ENCODE measurements at regions of chr5 and their contacts with region 1.

Region 1: GRCh38 chr5:139560752-139561654 is at the start of gene UBE2D2:
- DNase-seq: peak; percentile 90
- ATAC-seq: peak; percentile 94
- H3K4me3 ChIP-seq: peak within 1 kb of the TSS; percentile 91 to 98 (median 95)
- H3K27ac ChIP-seq: peak within 1 kb of the TSS; percentile 95
- H3K4me1 ChIP-seq: peaks cover 42% of the 10 kb centered on the region
- H3K27me3 ChIP-seq: no peaks in the 10 kb centered on the region; a peak in 1 of 5 replicates
- CTCF ChIP-seq: peak; percentile 10; the same call in 1 of the 2 replicates
- EP300 ChIP-seq: no peak
- POLR2A ChIP-seq: peak; percentile 78 to 84
- RAD21 ChIP-seq: no peak; the same call in 1 of the 2 replicates
- total RNA-seq, gene UBE2D2: 109 and 118 TPM in 2 replicates

Region 2: DNA sequence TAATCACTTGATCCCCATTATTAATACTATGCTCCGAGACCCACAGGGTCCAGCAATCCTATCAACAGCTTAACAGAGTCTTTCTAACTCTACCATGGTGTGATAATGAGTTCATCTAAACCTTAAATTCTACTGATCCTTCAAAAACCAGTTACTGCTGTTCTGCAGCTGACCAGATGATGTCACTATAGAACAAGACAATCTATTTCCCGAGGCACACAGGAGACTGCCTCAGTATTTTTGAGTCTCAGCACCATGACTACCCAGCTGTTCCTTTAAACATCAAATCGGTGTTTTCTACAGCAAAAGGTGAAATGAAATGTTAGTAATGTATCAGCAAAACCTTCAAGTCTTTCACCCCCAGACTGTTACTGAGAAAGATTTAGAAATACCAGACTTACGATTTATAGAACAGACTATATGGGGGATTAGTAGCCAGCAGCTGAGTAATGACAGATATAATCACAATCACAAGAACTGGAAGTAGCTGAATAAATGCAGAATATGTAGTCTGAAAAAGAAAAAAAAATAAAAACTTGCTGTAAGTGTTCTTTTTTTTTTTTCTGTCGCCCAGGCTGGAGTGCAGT is 138.6 kb before region 1 on chr5:
- CTCF ChIA-PET with region 1: no interaction called
- POLR2A ChIA-PET with region 1: interaction called, 3 read pairs
- in situ Hi-C with region 1: no loop called
- intact Hi-C with region 1: loop called (anchors 5 kb)
- DNase-seq: peak; percentile 66
- ATAC-seq: peak; percentile 82
- H3K4me3 ChIP-seq: no peak overlapping the region
- H3K27ac ChIP-seq: no peak overlapping the region
- H3K4me1 ChIP-seq: peaks cover 16% of the 10 kb centered on the region
- H3K27me3 ChIP-seq: no peaks in the 10 kb centered on the region
- CTCF ChIP-seq: peak; percentile 89
- EP300 ChIP-seq: no peak
- POLR2A ChIP-seq: no peak
- RAD21 ChIP-seq: peak; percentile 81

Region 3: DNA sequence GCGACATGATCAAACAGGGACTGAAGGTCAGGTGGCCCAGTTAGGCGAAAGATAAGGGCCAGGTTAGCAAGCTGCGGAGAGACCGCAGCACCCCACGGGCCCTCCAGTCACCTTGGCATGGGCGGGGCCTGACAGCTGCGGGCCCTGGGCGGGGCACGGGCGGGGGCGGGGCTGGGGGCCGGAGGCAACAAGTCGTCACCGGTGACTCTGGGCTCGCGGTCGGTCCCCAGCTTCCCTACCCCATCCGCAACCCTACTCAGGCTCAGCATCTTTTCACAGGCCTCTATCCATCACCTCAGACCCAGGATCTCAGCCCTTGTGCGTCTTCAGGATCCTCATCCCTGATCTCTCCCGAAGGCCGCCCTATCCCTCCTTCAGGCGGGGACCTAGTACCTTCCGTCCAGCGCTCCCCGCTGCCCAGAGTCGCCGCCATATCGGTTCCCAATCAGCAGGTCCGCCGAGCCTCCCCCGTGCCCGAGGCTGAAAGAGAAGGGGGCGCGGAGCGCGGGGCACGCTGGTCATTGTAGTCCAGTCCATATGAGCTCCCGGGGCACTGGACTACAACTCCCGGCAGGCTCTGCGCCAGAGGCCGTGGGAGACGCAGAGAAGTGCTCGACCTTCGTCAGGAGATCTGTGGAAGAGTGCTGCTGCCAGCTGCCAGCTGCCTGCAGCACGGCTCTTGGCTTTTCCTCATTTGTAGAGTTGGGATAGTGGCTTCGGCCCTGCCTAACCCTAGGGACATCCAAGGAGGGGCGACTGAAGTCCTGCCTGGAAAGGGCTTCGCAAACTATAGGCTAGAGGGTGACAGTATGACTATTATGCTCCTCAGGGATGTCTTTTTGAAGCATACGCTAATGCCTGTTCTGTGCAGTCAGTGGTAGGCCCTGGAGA is 121.7 kb before region 1 on chr5 and contains the start of gene DNAJC18:
- CTCF ChIA-PET with region 1: no interaction called
- POLR2A ChIA-PET with region 1: interaction called, 12 read pairs
- in situ Hi-C with region 1: no loop called
- intact Hi-C with region 1: no loop called
- DNase-seq: peak; percentile 81
- ATAC-seq: peak; percentile 97
- H3K4me3 ChIP-seq: peak within 1 kb of the TSS; percentile 89 to 98 (median 89)
- H3K27ac ChIP-seq: peak within 1 kb of the TSS; percentile 73
- H3K4me1 ChIP-seq: peaks cover 15% of the 10 kb centered on the region
- H3K27me3 ChIP-seq: 0 out of 5 replicates have a peak, but pooled peaks cover 0 to 7% of the 10 kb centered on the region in 2 experiments
- CTCF ChIP-seq: 0 out of 2 replicates have a peak, but pooled peaks have one; percentile 30
- EP300 ChIP-seq: no peak
- POLR2A ChIP-seq: peak; percentile 35 to 80; a peak in 3 of 4 replicates
- RAD21 ChIP-seq: 0 out of 2 replicates have a peak, but pooled peaks have one; percentile 19
- total RNA-seq, gene DNAJC18: 6.5 and 9.6 TPM in 2 replicates

Region 4: DNA sequence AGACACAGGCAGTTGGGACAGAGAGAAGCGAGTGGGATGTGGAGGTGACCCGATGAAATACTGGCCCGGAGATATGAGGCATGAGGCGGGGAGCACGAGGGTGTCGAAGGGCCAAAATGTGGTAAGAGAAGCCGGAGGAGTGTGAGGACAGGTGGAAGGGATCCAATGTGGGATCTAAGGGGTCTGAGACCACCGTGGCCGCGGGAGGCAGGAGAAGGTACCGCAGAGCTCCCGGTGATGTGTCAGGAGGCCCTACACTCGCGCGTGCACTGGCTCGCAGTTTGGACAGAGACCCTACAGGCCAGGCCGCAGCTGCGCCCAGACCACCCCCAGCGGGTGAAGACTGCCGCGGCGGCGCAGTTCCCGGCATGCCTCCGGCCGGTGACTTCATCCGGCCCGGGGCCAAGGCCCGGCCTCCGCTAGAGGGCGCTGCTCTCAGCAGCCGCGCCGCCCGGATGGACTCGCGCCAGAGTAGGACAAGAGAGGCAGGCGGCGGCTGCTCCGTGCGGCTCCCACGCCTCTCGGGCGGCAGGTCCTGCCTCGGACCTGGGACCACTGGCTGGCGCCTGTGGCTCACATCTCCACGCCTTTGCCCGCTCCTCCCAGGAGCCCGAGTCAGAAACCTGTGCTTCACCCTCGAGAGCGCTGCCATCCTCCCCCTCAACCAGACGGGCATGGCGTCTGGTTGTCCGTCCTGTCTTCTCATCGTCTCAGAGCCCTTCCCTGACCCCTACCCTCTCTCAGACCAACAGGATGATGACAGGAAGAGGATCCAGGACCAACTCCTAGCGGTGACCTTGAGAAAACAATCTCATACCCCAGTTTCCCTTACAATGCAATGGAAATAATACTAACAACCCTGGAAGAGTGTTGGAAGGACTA is 43.1 kb before region 1 on chr5:
- CTCF ChIA-PET with region 1: interaction called, 5 read pairs
- POLR2A ChIA-PET with region 1: interaction called, 12 read pairs
- in situ Hi-C with region 1: loop called (anchors 5 kb)
- intact Hi-C with region 1: loop called (anchors 1 kb)
- DNase-seq: peak; percentile 80
- ATAC-seq: peak; percentile 91
- H3K4me3 ChIP-seq: peak overlapping the region; percentile 54 to 77 (median 59)
- H3K27ac ChIP-seq: peak overlapping the region; percentile 71
- H3K4me1 ChIP-seq: peaks cover 54% of the 10 kb centered on the region
- H3K27me3 ChIP-seq: no peaks in the 10 kb centered on the region; a peak in 1 of 5 replicates
- CTCF ChIP-seq: peak; percentile 96
- EP300 ChIP-seq: no peak
- POLR2A ChIP-seq: peak; percentile 83 to 89
- RAD21 ChIP-seq: peak; percentile 92

Region 5: GRCh38 chr5:139524932-139525585 is 35.9 kb before region 1 on chr5:
- CTCF ChIA-PET with region 1: no interaction called
- POLR2A ChIA-PET with region 1: interaction called, 10 read pairs
- in situ Hi-C with region 1: no loop called
- intact Hi-C with region 1: no loop called
- DNase-seq: no peak
- ATAC-seq: peak; percentile 58
- H3K4me3 ChIP-seq: peak overlapping the region; percentile 49 to 73 (median 69)
- H3K27ac ChIP-seq: peak overlapping the region; percentile 60
- H3K4me1 ChIP-seq: peaks cover 74% of the 10 kb centered on the region
- H3K27me3 ChIP-seq: no peaks in the 10 kb centered on the region; a peak in 1 of 5 replicates
- CTCF ChIP-seq: no peak
- EP300 ChIP-seq: no peak
- POLR2A ChIP-seq: no peak
- RAD21 ChIP-seq: no peak

Region 6: DNA sequence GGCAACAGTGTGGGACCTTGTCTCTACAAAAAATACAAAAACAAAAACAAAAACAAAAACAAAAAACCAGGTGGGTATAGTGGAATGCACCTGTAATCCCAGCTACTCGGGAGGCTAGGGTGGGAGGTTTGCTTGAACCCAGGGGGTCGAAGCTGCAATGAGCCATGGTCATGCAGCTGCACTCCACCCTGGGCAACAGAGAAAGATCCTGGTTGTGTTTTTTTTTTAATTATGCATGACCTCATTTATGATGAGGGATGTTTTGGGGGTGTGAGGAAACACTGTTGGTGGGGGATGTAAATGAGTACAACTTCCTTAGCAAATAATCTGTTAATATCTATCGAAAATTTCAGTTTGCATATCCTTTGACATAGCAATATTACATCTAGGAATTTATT is 29.2 kb before region 1 on chr5:
- CTCF ChIA-PET with region 1: no interaction called
- POLR2A ChIA-PET with region 1: interaction called, 10 read pairs
- in situ Hi-C with region 1: no loop called
- intact Hi-C with region 1: no loop called
- DNase-seq: no peak
- ATAC-seq: peak; percentile 23; the same call in 2 of the 3 replicates
- H3K4me3 ChIP-seq: peak overlapping the region in 1 of 3 experiments; percentile 35; a peak in 2 of 6 replicates
- H3K27ac ChIP-seq: peak overlapping the region; percentile 73
- H3K4me1 ChIP-seq: peaks cover 43% of the 10 kb centered on the region
- H3K27me3 ChIP-seq: no peaks in the 10 kb centered on the region
- CTCF ChIP-seq: no peak
- EP300 ChIP-seq: no peak
- POLR2A ChIP-seq: no peak
- RAD21 ChIP-seq: no peak

Region 7: DNA sequence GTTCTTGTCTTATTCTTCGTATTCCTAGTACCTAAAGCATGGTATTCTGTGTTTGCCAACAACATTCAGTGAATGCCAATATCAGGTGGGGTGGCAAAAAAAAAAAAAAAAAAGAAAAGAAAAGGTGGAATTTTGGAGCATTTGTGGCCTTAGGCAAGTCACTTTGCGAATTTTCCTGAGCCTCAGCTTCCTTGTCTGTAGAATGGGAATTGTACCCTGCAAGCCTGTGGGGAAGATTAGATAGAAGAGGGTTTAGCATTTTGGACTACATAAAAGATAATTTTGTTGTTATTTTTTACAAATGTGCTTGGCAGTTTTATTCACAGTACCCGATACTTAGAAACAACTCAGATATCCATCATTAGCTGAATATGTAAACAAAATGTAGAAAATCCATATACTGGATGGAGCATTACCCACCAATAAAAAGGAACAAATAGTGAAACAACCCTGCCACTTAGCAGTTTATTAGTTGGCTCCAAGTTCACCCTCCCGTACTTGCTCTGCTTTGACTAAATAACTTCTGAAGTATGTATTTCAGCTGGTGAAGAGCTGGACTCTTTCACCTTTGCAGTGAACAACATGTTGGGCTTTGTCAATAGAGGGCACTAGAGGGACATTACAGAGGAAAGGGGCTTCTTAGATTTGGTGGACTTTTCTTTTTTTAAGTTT is 13.8 kb after region 1 on chr5:
- CTCF ChIA-PET with region 1: no interaction called
- POLR2A ChIA-PET with region 1: interaction called, 14 read pairs
- in situ Hi-C with region 1: no loop called
- intact Hi-C with region 1: no loop called
- DNase-seq: peak; percentile 52
- ATAC-seq: peak; percentile 73
- H3K4me3 ChIP-seq: no peak overlapping the region
- H3K27ac ChIP-seq: peak overlapping the region; percentile 7
- H3K4me1 ChIP-seq: peaks cover 58% of the 10 kb centered on the region
- H3K27me3 ChIP-seq: no peaks in the 10 kb centered on the region
- CTCF ChIP-seq: peak; percentile 63
- EP300 ChIP-seq: no peak
- POLR2A ChIP-seq: no peak
- RAD21 ChIP-seq: no peak